Activated T-helper 1 cell treated with anti-CD3 and anti-CD28 coated beads, Interleukin-12 subunit alpha, Interleukin-12 subunit beta, Interleukin-2, Interleukin-4 antibody, amounts not matched to agents 30 ng/mL and 10 ng/mL and 1 ng/mL, durations not matched to agents 14 hours and 24 hours and 36 hours (primary cell): ENCODE measurements at regions of chr1 and their contacts with region 1.

Region 1: GRCh38 chr1:110203021-110203661 is 7.0 kb upstream of the KCNC4 start:
- DNase-seq: peak; percentile 67
- H3K4me3 Mint-ChIP-seq: no peak overlapping the region
- H3K27ac Mint-ChIP-seq: peak overlapping the region; percentile 88
- H3K4me1 Mint-ChIP-seq: peaks cover 15% of the 10 kb centered on the region
- H3K27me3 Mint-ChIP-seq: peaks cover 2% of the 10 kb centered on the region

Region 2: GRCh38 chr1:109892561-109893368 is 310.4 kb before region 1 on chr1:
- intact Hi-C with region 1: no loop called
- DNase-seq: no peak
- H3K4me3 Mint-ChIP-seq: no peak overlapping the region
- H3K27ac Mint-ChIP-seq: peak overlapping the region; percentile 85
- H3K4me1 Mint-ChIP-seq: peaks cover 9% of the 10 kb centered on the region
- H3K27me3 Mint-ChIP-seq: no peaks in the 10 kb centered on the region

Region 3: GRCh38 chr1:110118636-110119615 is 84.2 kb before region 1 on chr1:
- intact Hi-C with region 1: no loop called
- DNase-seq: no peak
- H3K4me3 Mint-ChIP-seq: no peak overlapping the region
- H3K27ac Mint-ChIP-seq: no peak overlapping the region
- H3K4me1 Mint-ChIP-seq: no peaks in the 10 kb centered on the region
- H3K27me3 Mint-ChIP-seq: peaks cover 14% of the 10 kb centered on the region

Region 4: GRCh38 chr1:110144366-110144765 is 58.8 kb before region 1 on chr1:
- intact Hi-C with region 1: no loop called
- DNase-seq: no peak
- H3K4me3 Mint-ChIP-seq: no peak overlapping the region
- H3K27ac Mint-ChIP-seq: no peak overlapping the region
- H3K4me1 Mint-ChIP-seq: no peaks in the 10 kb centered on the region
- H3K27me3 Mint-ChIP-seq: peaks cover 18% of the 10 kb centered on the region

Region 5: GRCh38 chr1:110235834-110236682 is 32.9 kb after region 1 on chr1:
- intact Hi-C with region 1: loop called (anchors 5 kb)
- DNase-seq: no peak
- H3K4me3 Mint-ChIP-seq: no peak overlapping the region
- H3K27ac Mint-ChIP-seq: peak overlapping the region; percentile 80
- H3K4me1 Mint-ChIP-seq: peaks cover 51% of the 10 kb centered on the region
- H3K27me3 Mint-ChIP-seq: no peaks in the 10 kb centered on the region

Region 6: GRCh38 chr1:110312188-110313121 is 109.3 kb after region 1 on chr1:
- intact Hi-C with region 1: loop called (anchors 1 kb)
- DNase-seq: peak; percentile 46
- H3K4me3 Mint-ChIP-seq: no peak overlapping the region
- H3K27ac Mint-ChIP-seq: no peak overlapping the region
- H3K4me1 Mint-ChIP-seq: no peaks in the 10 kb centered on the region
- H3K27me3 Mint-ChIP-seq: no peaks in the 10 kb centered on the region

Region 7: DNA sequence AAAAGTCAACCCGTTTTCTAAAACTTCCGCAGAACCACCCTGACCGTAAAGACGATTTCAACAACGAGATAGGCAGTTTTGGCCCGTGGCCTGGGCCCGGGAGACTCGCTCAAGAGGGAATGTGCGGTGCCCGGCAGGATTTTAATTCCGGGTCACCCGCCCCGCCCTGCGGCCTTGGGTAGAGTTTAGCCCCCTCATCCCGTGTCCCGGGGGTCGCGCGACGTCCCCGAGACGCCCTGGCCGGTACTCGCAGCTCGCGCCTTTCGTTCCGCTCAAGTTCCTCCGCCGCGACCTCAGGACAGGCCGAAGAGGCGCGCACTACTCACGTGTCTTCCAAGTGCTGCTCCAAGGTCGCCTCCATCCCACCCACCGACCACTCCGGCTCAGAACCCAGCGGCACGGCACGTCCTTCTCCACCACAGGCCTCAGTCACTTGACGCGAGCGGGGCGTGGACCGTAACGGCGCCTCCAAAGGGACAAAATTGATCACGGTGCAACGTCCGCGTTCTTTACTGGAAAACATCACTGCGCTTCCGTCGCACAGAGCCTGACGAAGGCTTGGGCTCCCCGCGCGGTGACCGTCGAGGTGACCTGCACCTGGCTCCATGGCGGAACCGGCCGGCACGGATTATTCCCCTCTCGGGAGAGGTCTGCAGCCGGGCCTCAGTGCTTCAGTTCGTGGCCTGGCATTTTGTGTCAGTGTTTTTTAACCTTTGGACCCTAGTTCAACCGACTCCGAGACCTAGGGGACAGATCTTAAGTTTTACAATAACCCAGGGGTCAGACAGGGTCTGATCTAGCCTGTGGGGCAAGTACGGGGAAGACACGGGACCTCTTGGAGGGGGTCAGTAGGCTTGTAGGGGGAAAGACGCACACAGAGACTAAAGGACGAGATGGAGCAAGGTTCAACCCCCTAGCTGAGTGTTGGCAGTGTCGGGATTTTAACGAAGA is 204.4 kb after region 1 on chr1 and contains the start of gene LAMTOR5:
- intact Hi-C with region 1: loop called (anchors 1 kb)
- DNase-seq: peak; percentile 90
- H3K4me3 Mint-ChIP-seq: peak within 1 kb of the TSS; percentile 100
- H3K27ac Mint-ChIP-seq: peak within 1 kb of the TSS; percentile 100
- H3K4me1 Mint-ChIP-seq: peaks cover 22% of the 10 kb centered on the region
- H3K27me3 Mint-ChIP-seq: no peaks in the 10 kb centered on the region
- total RNA-seq, gene LAMTOR5: 163 and 184 TPM in 2 replicates

Region 8: GRCh38 chr1:110412576-110412975 is 209.4 kb after region 1 on chr1:
- intact Hi-C with region 1: loop called (anchors 1 kb)
- DNase-seq: peak; percentile 46
- H3K4me3 Mint-ChIP-seq: no peak overlapping the region
- H3K27ac Mint-ChIP-seq: no peak overlapping the region
- H3K4me1 Mint-ChIP-seq: peaks cover 13% of the 10 kb centered on the region
- H3K27me3 Mint-ChIP-seq: peaks cover 5% of the 10 kb centered on the region

Region 9: GRCh38 chr1:110495926-110496600 is 292.9 kb after region 1 on chr1:
- intact Hi-C with region 1: loop called (anchors 1 kb)
- DNase-seq: peak; percentile 65
- H3K4me3 Mint-ChIP-seq: no peak overlapping the region
- H3K27ac Mint-ChIP-seq: no peak overlapping the region
- H3K4me1 Mint-ChIP-seq: no peaks in the 10 kb centered on the region
- H3K27me3 Mint-ChIP-seq: peaks cover 3% of the 10 kb centered on the region